ENCODE measurements at regions of chr9 and their contacts with region 1.

Region 1: GRCh38 chr9:127943731-127944144 is 6.1 kb upstream of the DPM2 start:
- DNase-seq: peak; percentile 88
- ATAC-seq: peak; percentile 93
- H3K4me3 Mint-ChIP-seq: no peak overlapping the region
- H3K27ac Mint-ChIP-seq: peak overlapping the region; percentile 86
- H3K4me1 Mint-ChIP-seq: peaks cover 29% of the 10 kb centered on the region
- H3K27me3 Mint-ChIP-seq: no peaks in the 10 kb centered on the region
- CTCF ChIP-seq: peak; percentile 95

Region 2: GRCh38 chr9:127955294-127956035 is 11.7 kb after region 1 on chr9:
- CTCF ChIA-PET with region 1: interaction called, 181 read pairs
- POLR2A ChIA-PET with region 1: interaction called, 11 read pairs
- intact Hi-C with region 1: no loop called
- DNase-seq: peak; percentile 96
- ATAC-seq: peak; percentile 90
- H3K4me3 Mint-ChIP-seq: peak overlapping the region; percentile 46
- H3K27ac Mint-ChIP-seq: peak overlapping the region; percentile 88
- H3K4me1 Mint-ChIP-seq: peaks cover 80% of the 10 kb centered on the region
- H3K27me3 Mint-ChIP-seq: no peaks in the 10 kb centered on the region
- CTCF ChIP-seq: peak; percentile 68

Region 3: GRCh38 chr9:127980706-127981558 is 37.2 kb after region 1 on chr9 and contains the start of gene EEIG1:
- CTCF ChIA-PET with region 1: interaction called, 91 read pairs
- POLR2A ChIA-PET with region 1: interaction called, 408 read pairs
- intact Hi-C with region 1: loop called (anchors 5 kb)
- DNase-seq: peak; percentile 97
- ATAC-seq: peak; percentile 87
- H3K4me3 Mint-ChIP-seq: peak within 1 kb of the TSS; percentile 97
- H3K27ac Mint-ChIP-seq: peak within 1 kb of the TSS; percentile 97
- H3K4me1 Mint-ChIP-seq: peaks cover 46% of the 10 kb centered on the region
- H3K27me3 Mint-ChIP-seq: no peaks in the 10 kb centered on the region
- CTCF ChIP-seq: no peak
- total RNA-seq, gene EEIG1: 79.7 to 81.5 TPM

Region 4: DNA sequence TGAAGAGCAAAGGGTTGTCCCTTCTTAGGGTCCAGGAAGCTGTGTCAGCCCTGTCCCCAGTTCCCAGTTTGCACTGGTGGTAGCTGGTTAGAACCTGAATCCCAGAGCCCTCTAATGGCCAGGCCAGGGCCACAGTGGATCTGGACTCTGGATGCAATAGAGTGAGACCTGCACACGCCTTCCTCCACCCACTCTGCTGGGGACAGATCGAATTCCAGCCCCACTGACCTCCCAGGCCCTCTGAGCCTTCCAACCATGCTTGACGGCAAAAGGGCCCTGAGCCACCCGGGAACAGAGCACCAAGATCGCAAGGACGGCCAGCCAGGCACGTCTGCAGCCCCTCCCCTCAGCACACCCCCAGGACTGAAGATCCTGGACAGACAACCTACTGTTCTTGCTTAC is 99.7 kb after region 1 on chr9:
- CTCF ChIA-PET with region 1: interaction called, 631 read pairs
- POLR2A ChIA-PET with region 1: interaction called, 3 read pairs
- intact Hi-C with region 1: loop called (anchors 5 kb)
- DNase-seq: no peak
- ATAC-seq: no peak
- H3K4me3 Mint-ChIP-seq: no peak overlapping the region
- H3K27ac Mint-ChIP-seq: no peak overlapping the region
- H3K4me1 Mint-ChIP-seq: peaks cover 7% of the 10 kb centered on the region
- H3K27me3 Mint-ChIP-seq: no peaks in the 10 kb centered on the region
- CTCF ChIP-seq: no peak

Region 5: DNA sequence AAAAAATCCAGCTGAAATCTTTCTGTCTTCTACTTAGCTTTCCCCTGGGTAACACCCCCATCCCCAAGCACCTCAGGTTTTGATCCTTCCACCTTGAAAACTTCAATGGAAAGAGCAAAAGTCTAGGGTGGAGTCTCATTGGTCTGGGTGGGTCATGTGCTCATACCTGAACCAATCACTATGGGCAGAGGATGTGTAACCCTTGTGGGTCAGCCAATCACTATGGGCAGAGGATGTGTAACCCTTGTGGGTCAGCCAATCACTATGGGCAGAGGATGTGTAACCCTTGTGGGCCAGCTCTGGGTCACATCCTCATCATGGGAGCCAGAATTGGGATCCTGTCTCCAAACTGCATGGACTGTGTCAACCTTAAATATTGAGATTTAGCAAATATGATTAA is 104.9 kb after region 1 on chr9:
- CTCF ChIA-PET with region 1: interaction called, 24 read pairs
- POLR2A ChIA-PET with region 1: no interaction called
- intact Hi-C with region 1: no loop called
- DNase-seq: no peak
- ATAC-seq: peak; percentile 93
- H3K4me3 Mint-ChIP-seq: no peak overlapping the region
- H3K27ac Mint-ChIP-seq: no peak overlapping the region
- H3K4me1 Mint-ChIP-seq: peaks cover 2% of the 10 kb centered on the region
- H3K27me3 Mint-ChIP-seq: no peaks in the 10 kb centered on the region
- CTCF ChIP-seq: no peak

Region 6: GRCh38 chr9:128103589-128103962 is 159.8 kb after region 1 on chr9:
- CTCF ChIA-PET with region 1: interaction called, 10 read pairs
- POLR2A ChIA-PET with region 1: no interaction called
- intact Hi-C with region 1: no loop called
- DNase-seq: peak; percentile 68
- ATAC-seq: peak; percentile 74
- H3K4me3 Mint-ChIP-seq: no peak overlapping the region
- H3K27ac Mint-ChIP-seq: peak overlapping the region; percentile 75
- H3K4me1 Mint-ChIP-seq: peaks cover 49% of the 10 kb centered on the region
- H3K27me3 Mint-ChIP-seq: no peaks in the 10 kb centered on the region
- CTCF ChIP-seq: peak; percentile 53

Region 7: GRCh38 chr9:128275996-128276573 is 332.3 kb after region 1 on chr9 and contains the starts of genes GOLGA2 and SWI5:
- CTCF ChIA-PET with region 1: no interaction called
- POLR2A ChIA-PET with region 1: no interaction called
- intact Hi-C with region 1: no loop called
- DNase-seq: peak; percentile 100
- ATAC-seq: peak; percentile 97
- H3K4me3 Mint-ChIP-seq: peak within 1 kb of the TSS; percentile 92
- H3K27ac Mint-ChIP-seq: peak within 1 kb of the TSS; percentile 94
- H3K4me1 Mint-ChIP-seq: peaks cover 35% of the 10 kb centered on the region
- H3K27me3 Mint-ChIP-seq: no peaks in the 10 kb centered on the region
- CTCF ChIP-seq: no peak
- total RNA-seq, gene GOLGA2: 29.8 to 34.6 TPM
- total RNA-seq, gene SWI5: 12.4 to 13.3 TPM

Measured in activated CD8-positive, alpha-beta T cell treated with anti-CD3 and anti-CD28 coated beads for 36 hours (primary cell).